ENCODE measurements at regions of chr11 and their contacts with region 1.

Region 1: GRCh38 chr11:45102810-45103621 is 43.4 kb upstream of the PRDM11 start:
- DNase-seq: peak; percentile 68
- ATAC-seq: peak; percentile 67

Region 2: GRCh38 chr11:44936525-44936924 is 166.5 kb before region 1 on chr11:
- intact Hi-C with region 1: loop called (anchors 5 kb)
- DNase-seq: peak; percentile 88
- ATAC-seq: peak; percentile 62

Region 3: GRCh38 chr11:45296085-45296484 is 193.1 kb after region 1 on chr11:
- intact Hi-C with region 1: loop called (anchors 2 kb)
- DNase-seq: no peak
- ATAC-seq: no peak

Measured in left ventricle myocardium superior (tissue), 1 donor.